Right lobe of liver (tissue), 6 donors: ENCODE measurements at regions of chr19 and their contacts with region 1.

Region 1: GRCh38 chr19:4065430-4066175 is 1.1 kb downstream of the ZBTB7A start:
- DNase-seq: peak; percentile 98 to 99 (median 98)
- ATAC-seq: peak; percentile 70 to 85 (median 78)
- H3K4me3 ChIP-seq: peak overlapping the region; percentile 61 to 96 (median 70)
- H3K27ac ChIP-seq: peak overlapping the region in 1 of 3 donors; percentile 94
- H3K4me1 ChIP-seq: peaks cover 0 to 38% (median 16%) of the 10 kb centered on the region in 4 donors
- H3K27me3 ChIP-seq: no peaks in the 10 kb centered on the region
- CTCF ChIP-seq: no peak
- POLR2A ChIP-seq: peak; percentile 55

Region 2: GRCh38 chr19:3932931-3933810 is 132.4 kb before region 1 on chr19 and contains the start of gene NMRK2:
- intact Hi-C with region 1: no loop called
- DNase-seq: no peak
- ATAC-seq: no peak
- H3K4me3 ChIP-seq: no peak within 1 kb of the TSS
- H3K27ac ChIP-seq: no peak within 1 kb of the TSS
- H3K4me1 ChIP-seq: no peaks in the 10 kb centered on the region
- H3K27me3 ChIP-seq: no peaks in the 10 kb centered on the region
- CTCF ChIP-seq: no peak
- POLR2A ChIP-seq: no peak
- total RNA-seq, gene NMRK2: 0.17 TPM in 1 of 6 experiments, not detected in the others

Region 3: DNA sequence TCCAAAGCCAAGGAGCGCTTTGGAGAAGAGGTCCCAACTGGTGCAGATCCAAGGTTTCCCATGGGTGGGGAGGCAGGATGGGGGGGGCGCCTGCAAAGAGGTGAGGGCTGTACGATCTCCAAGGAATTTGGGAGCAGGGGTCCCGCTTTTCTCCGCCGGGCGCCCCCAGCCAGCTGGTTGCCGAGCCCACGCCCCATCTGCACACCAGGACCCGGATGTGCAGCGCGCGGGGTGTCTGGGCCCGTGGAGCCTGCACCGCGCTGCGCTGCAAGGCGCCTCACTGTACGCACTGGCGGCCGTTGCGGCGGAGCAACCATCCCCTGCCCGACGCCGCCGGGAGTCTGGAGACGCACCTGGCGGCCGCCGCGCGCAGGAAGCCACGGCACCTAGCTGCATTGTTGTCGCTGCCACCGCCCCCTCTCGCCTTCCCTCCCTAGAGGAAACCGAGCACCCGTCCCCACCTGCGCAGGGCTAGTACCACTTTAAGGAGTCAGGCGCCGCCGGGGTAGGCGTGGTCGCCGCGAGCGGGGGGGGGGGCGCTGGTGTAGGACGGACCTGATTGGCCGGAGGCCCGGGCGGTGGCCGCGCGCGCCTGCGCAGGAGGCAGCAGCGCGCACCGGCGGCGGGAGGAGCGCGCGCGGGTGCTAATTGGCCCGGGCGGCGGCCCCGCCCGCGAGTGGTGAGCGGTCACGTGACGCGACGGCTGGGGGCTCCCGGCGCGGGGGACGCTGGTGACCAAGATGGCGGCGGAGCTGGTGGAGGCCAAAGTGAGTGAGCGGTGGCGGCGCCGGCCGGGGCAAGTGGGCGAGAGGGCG is 58.4 kb before region 1 on chr19 and contains the start of gene PIAS4:
- intact Hi-C with region 1: loop called (anchors 10 kb)
- DNase-seq: peak; percentile 96
- ATAC-seq: peak; percentile 84 to 92 (median 90)
- H3K4me3 ChIP-seq: peak within 1 kb of the TSS; percentile 67 to 98 (median 83)
- H3K27ac ChIP-seq: peak within 1 kb of the TSS; percentile 49 to 91 (median 88)
- H3K4me1 ChIP-seq: peaks cover 0 to 34% (median 4%) of the 10 kb centered on the region in 4 donors
- H3K27me3 ChIP-seq: no peaks in the 10 kb centered on the region
- CTCF ChIP-seq: no peak
- POLR2A ChIP-seq: peak; percentile 72
- total RNA-seq, gene PIAS4: 9.9 to 20.0 (median 14.9) TPM

Region 4: GRCh38 chr19:4014541-4015491 is 50.8 kb before region 1 on chr19:
- intact Hi-C with region 1: loop called in 1 of 2 experiments (anchors 10 kb)
- DNase-seq: peak in 1 of 3 donors; percentile 48
- ATAC-seq: peak in 1 of 4 donors; percentile 10
- H3K4me3 ChIP-seq: no peak overlapping the region
- H3K27ac ChIP-seq: peak overlapping the region in 1 of 3 donors; percentile 57
- H3K4me1 ChIP-seq: peaks cover 0 to 44% (median 4%) of the 10 kb centered on the region in 4 donors
- H3K27me3 ChIP-seq: no peaks in the 10 kb centered on the region
- CTCF ChIP-seq: no peak
- POLR2A ChIP-seq: no peak